ENCODE measurements at regions of chr12 and their contacts with region 1.

Region 1: GRCh38 chr12:112012775-112013600 is at the starts of genes ERP29 and TMEM116:
- DNase-seq: peak; percentile 99 to 100 (median 100)

Region 2: DNA sequence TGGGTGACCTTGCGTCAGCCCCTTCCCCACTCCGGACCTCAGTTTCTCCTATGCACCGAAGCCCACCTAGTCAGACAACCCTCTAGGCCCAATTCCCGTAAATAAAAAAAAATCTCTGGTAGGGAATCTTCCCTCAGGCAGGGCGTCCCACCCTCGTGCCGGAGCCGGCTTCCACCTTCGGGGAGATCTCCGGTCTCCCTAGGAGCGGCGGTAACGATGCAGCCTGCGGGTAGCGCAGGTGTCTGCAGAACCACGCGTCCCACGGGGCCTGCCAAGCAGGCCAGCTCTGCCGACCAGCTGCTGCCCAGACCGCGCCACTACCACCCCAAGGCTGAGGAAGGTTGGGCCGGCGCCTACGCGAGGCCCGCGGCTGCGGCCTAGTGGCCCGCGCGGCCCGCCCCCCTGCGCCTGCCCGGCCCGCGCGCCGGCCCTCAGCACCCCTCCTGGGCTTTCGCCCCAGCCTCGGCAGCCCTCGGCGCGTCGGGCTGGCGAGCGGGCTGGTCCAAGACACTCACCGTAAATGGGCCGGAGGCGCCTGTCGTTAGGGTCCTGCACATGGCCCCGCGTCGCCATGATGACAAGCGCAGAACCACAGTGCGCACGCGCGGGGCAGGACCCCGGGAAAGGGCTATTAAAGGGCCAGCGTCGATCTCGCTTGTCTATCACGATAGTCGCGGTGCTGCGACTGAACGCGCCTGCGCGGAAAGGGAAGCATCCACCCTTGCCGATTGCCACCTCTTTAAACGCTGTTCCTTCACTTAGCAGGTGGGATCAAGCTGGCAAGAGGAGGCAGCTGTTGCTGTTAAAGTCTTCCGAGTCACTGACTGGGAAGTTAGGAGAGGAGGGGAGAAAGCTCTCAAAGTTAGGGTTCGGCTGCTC is 95.5 kb after region 1 on chr12 and contains the start of gene NAA25:
- intact Hi-C with region 1: loop called (anchors 2 kb)
- DNase-seq: peak; percentile 81 to 98 (median 88)

Measured in posterior cingulate gyrus (tissue), 11 donors.